GM12878 (cell line): ENCODE measurements at regions of chr1 and their contacts with region 1.

Region 1: DNA sequence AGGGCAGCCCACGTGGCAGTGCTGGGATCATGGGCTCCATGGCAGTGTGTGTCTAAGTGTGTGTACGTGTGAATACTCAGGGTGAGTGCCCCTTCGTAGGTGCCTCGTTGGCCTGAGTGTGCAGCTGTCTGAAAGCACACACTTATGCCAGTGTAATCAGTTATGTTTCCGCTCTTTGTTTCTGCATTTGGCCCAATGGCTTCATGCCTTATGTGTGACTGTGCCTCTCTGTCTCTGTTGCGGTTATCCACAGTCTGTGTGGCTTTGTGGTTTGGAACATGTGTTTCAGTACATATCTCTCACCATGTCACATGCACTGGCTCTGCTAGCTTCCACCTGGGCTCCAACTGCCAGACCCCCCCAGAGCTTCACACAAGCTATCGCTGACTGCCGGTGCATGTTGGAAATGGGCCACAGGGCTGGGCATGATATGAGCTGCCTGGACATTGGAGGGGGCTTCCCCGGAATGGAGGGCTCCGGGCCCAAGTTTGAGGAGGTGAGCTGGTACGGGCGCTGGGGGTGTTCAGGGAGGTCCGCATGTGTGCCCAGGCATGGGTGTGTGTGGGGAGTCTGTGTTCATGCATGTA is 70.3 kb upstream of the TINAGL1 start:
- DNase-seq: peak; percentile 83
- ATAC-seq: peak; percentile 56
- H3K4me3 ChIP-seq: no peak overlapping the region
- H3K27ac ChIP-seq: 0 out of 2 replicates have a peak overlapping the region, but pooled peaks have one; percentile 51
- H3K4me1 ChIP-seq: peaks cover 23% of the 10 kb centered on the region
- H3K27me3 ChIP-seq: no peaks in the 10 kb centered on the region
- CTCF ChIP-seq: no peak
- EP300 ChIP-seq: peak; percentile 79 to 91
- POLR2A ChIP-seq: no peak; the same call in 1 of the 2 replicates
- RAD21 ChIP-seq: no peak

Region 2: DNA sequence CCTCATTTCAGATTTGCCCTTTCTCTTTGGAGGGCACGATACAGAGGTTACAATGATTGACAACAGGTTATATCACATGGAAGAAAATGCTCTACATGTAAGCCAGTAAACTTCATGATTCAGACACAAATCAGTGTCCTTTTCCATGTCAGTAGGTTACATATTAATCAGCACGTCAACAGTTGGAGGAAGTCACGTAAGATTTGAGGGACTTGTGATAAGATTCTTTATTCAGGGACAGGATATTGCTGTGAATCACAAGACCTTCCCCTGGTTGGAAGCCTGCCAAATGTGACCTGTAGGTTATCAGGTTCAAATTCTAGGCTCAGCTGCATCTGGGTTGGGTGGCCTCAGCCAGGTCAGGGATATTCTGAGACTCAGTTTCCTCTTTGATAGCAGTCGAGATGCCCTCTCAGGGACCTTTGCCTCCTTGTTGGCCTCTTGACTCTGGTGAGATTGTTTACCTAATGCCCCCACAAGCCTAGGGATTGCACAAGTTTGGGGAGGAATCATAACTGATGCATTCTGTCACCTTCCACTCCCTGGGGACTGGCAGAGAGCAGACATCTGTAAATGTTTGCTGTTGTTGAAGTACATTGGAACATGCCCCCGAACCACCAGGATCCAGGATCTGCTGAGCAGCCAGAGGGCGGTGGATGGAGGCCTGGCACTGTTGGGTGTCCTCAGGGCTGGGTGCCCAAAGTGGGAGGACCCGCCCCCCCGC is 61.1 kb before region 1 on chr1:
- CTCF ChIA-PET with region 1: interaction called, 7 read pairs
- POLR2A ChIA-PET with region 1: interaction called, 12 read pairs
- RAD21 ChIA-PET with region 1: interaction called, 9 read pairs
- SMC1A ChIA-PET with region 1: interaction called, 9 read pairs
- in situ Hi-C with region 1: no loop called
- intact Hi-C with region 1: no loop called
- DNase-seq: no peak
- ATAC-seq: no peak
- H3K4me3 ChIP-seq: no peak overlapping the region
- H3K27ac ChIP-seq: no peak overlapping the region
- H3K4me1 ChIP-seq: no peaks in the 10 kb centered on the region
- H3K27me3 ChIP-seq: no peaks in the 10 kb centered on the region
- CTCF ChIP-seq: no peak
- EP300 ChIP-seq: no peak
- POLR2A ChIP-seq: no peak
- RAD21 ChIP-seq: no peak

Region 3: DNA sequence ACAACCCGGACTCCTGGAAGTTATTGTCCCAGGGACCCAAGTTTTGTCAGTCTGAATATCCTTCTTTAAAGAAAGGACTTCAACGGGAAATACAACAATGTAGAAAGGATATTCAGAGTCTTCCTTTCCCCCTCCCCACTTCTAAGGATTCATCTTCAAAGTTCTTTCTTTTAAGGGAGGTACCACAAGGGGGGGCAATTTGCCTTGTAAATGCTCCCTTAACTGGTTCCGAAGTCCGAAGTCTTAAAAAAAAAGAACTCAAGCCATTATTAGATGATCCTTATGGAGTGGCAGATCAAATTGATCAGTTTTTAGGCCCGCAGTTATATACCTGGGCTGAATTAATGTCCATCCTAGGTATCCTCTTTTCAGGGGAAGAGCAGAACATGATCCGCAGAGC is 46.0 kb before region 1 on chr1:
- CTCF ChIA-PET with region 1: interaction called, 5 read pairs
- POLR2A ChIA-PET with region 1: interaction called, 5 read pairs
- RAD21 ChIA-PET with region 1: interaction called, 8 read pairs
- SMC1A ChIA-PET with region 1: interaction called, 44 read pairs
- in situ Hi-C with region 1: no loop called
- intact Hi-C with region 1: loop called (anchors 5 kb)
- DNase-seq: no peak
- ATAC-seq: no peak
- H3K4me3 ChIP-seq: no peak overlapping the region
- H3K27ac ChIP-seq: no peak overlapping the region
- H3K4me1 ChIP-seq: no peaks in the 10 kb centered on the region
- H3K27me3 ChIP-seq: no peaks in the 10 kb centered on the region
- CTCF ChIP-seq: peak in 1 of 3 experiments; percentile 7; a peak in 1 of 6 replicates
- EP300 ChIP-seq: no peak
- POLR2A ChIP-seq: no peak
- RAD21 ChIP-seq: no peak

Region 4: DNA sequence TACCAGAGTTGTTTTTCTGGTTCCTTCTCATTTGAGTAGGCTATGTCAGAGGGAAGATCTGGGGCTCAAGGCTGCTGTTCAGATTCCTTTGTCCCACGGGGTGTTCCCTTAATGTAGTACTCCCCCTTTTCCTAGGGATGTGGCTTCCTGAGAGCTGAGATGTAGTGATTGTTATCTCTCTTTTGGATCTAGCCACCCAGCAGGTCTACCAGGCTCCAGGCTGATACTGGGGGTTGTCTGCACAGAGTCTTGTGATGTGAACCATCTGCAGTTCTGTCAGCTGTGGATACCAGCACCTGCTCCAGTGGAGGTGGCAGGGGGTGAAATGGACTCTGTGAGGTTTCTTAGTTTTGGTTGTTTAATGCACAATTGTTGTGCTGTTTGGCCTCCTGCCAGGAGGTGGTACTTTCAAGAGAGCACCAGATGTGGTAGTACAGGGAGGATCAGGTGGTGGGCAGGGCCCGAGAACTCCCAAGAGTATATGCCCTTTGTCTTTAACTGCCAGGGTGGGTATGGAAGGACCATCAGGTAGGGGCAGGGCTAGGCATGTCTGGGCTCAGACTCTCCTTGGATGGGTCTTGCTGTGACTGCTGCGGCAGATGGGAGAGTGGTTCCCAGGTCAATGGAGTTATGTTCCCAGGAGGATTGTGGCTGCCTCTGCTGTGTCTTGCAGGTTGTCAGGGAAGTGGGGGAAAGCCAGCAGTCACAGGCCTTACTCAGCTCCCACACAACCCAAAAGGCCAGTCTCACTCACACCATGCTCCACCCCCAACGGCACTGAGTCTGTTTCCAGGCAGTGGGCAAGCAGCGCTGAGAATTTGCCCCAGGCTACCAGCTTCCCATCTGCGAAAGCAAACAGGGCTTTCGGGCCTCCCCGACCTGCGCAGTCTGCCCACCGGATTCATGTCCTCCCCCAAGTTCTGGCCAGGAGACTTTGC is 28.8 kb before region 1 on chr1:
- CTCF ChIA-PET with region 1: interaction called, 35 read pairs
- POLR2A ChIA-PET with region 1: interaction called, 260 read pairs
- RAD21 ChIA-PET with region 1: interaction called, 122 read pairs
- SMC1A ChIA-PET with region 1: interaction called, 230 read pairs
- in situ Hi-C with region 1: no loop called
- intact Hi-C with region 1: no loop called
- DNase-seq: peak; percentile 77
- ATAC-seq: peak; percentile 89
- H3K4me3 ChIP-seq: no peak overlapping the region
- H3K27ac ChIP-seq: no peak overlapping the region
- H3K4me1 ChIP-seq: no peaks in the 10 kb centered on the region
- H3K27me3 ChIP-seq: no peaks in the 10 kb centered on the region
- CTCF ChIP-seq: no peak
- EP300 ChIP-seq: 0 out of 4 replicates have a peak, but pooled peaks of 1 of the 2 experiments have one; percentile 23
- POLR2A ChIP-seq: no peak
- RAD21 ChIP-seq: no peak

Region 5: DNA sequence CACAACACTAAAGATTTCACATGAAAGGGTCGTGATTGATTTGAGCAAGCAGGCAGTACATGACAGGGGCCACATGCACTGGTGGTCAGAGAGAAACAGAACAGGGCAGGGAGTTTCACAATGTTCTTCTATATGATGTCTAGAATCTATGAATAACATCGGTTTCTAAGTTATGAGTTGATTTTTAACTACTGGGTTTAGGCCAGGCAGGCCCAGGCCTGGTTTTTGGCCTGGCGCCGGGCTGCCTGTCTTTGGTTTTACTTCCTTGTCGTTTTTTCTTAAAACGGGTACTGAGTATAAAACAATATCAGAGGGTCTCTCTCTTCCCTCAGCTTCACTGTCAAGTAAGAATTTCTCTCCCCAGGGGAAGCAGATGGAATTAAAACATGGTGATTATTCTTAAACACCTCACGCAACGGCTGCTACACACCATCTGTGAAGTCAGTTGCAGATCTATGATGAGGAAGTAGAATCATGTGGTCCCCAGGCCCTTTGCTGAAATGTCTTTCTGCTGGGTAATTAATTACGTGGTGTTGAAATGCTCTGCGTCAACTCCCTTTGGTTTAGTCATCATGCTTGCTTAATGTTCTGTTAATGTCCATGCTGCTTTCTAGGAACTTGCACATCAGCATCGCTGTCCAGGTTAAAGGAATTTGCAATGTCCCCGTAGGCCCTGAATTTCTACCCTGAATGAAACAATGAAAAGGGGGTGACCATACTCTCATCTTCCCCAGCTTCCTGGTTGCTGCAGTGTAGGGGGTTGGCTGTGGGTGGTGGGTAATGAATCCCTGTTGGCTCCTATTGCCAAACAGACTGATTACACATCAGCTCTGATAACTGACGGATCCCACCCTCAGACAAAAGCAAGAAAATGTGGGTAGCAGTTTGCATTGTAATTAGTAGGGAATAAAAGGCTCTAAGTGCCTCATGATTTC is 22.7 kb before region 1 on chr1:
- CTCF ChIA-PET with region 1: interaction called, 35 read pairs
- POLR2A ChIA-PET with region 1: interaction called, 260 read pairs
- RAD21 ChIA-PET with region 1: interaction called, 122 read pairs
- SMC1A ChIA-PET with region 1: interaction called, 230 read pairs
- in situ Hi-C with region 1: no loop called
- intact Hi-C with region 1: loop called (anchors 1 kb)
- DNase-seq: peak; percentile 58
- ATAC-seq: peak; percentile 91
- H3K4me3 ChIP-seq: no peak overlapping the region
- H3K27ac ChIP-seq: peak overlapping the region; percentile 57
- H3K4me1 ChIP-seq: no peaks in the 10 kb centered on the region
- H3K27me3 ChIP-seq: no peaks in the 10 kb centered on the region
- CTCF ChIP-seq: no peak
- EP300 ChIP-seq: peak in 1 of 2 experiments; percentile 87; a peak in 3 of 4 replicates
- POLR2A ChIP-seq: no peak
- RAD21 ChIP-seq: no peak

Region 6: GRCh38 chr1:31488528-31488927 is 17.5 kb before region 1 on chr1:
- CTCF ChIA-PET with region 1: interaction called, 12 read pairs
- POLR2A ChIA-PET with region 1: interaction called, 260 read pairs
- RAD21 ChIA-PET with region 1: interaction called, 122 read pairs
- SMC1A ChIA-PET with region 1: interaction called, 230 read pairs
- in situ Hi-C with region 1: no loop called
- intact Hi-C with region 1: loop called (anchors 1 kb)
- DNase-seq: no peak
- ATAC-seq: no peak
- H3K4me3 ChIP-seq: no peak overlapping the region
- H3K27ac ChIP-seq: no peak overlapping the region
- H3K4me1 ChIP-seq: no peaks in the 10 kb centered on the region
- H3K27me3 ChIP-seq: no peaks in the 10 kb centered on the region
- CTCF ChIP-seq: no peak
- EP300 ChIP-seq: no peak
- POLR2A ChIP-seq: no peak
- RAD21 ChIP-seq: no peak

Region 7: GRCh38 chr1:31523769-31524168 is 17.8 kb after region 1 on chr1:
- CTCF ChIA-PET with region 1: interaction called, 17 read pairs
- POLR2A ChIA-PET with region 1: interaction called, 25 read pairs
- RAD21 ChIA-PET with region 1: interaction called, 41 read pairs
- SMC1A ChIA-PET with region 1: interaction called, 16 read pairs
- in situ Hi-C with region 1: no loop called
- intact Hi-C with region 1: no loop called
- DNase-seq: no peak
- ATAC-seq: peak; percentile 79
- H3K4me3 ChIP-seq: no peak overlapping the region
- H3K27ac ChIP-seq: no peak overlapping the region
- H3K4me1 ChIP-seq: no peaks in the 10 kb centered on the region
- H3K27me3 ChIP-seq: no peaks in the 10 kb centered on the region
- CTCF ChIP-seq: no peak
- EP300 ChIP-seq: no peak
- POLR2A ChIP-seq: no peak
- RAD21 ChIP-seq: no peak

Region 8: DNA sequence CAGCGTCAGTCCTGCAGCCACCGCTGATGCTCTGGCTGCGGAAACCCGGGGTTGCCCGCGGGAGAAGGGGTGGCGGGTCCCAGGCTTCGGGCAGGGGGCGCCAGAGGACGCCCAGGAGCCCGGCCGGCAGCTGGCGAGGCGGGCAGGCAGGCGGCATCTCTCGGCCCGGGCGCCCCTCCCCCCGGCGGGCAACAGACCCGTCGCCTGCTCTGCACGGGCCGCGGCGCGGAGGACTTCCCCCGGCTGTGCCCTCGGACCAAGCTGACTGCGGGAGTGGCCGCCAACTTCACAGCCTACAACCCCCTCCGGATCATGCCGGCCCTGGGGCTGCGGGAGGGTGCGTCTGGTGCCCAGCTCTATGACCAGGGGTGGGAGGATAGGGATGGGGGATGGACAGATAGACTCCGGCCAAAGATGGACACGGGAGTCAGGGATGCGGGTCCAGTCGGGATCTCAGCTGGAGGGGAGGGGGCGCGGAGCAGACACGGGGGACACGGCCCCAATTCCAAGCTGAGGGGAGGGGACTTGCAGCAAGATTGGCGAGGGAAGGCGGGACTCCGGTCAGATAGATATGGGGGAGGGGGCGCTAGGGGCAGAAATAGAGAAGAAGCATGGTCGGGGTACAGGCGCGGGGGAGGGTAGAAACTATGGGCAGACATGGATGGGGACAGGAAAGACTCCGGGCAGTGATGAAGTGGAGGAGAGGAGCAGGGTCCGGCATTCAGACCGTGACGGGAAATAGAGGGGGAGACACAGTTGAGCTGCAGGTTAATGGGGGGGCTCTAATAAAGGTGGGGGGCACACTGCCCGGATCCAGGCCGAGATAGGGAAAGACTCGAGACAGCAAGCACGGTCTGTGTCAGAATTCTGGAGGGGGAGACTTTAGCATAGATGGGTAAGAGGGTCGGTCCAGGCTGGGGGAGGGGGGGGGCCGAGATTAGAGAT is 257.0 kb after region 1 on chr1:
- CTCF ChIA-PET with region 1: no interaction called
- POLR2A ChIA-PET with region 1: no interaction called
- RAD21 ChIA-PET with region 1: no interaction called
- SMC1A ChIA-PET with region 1: no interaction called
- in situ Hi-C with region 1: no loop called
- intact Hi-C with region 1: no loop called
- DNase-seq: no peak
- ATAC-seq: peak; percentile 62
- H3K4me3 ChIP-seq: peak overlapping the region; percentile 32; the same call in 1 of the 2 replicates
- H3K27ac ChIP-seq: no peak overlapping the region
- H3K4me1 ChIP-seq: peaks cover 8% of the 10 kb centered on the region
- H3K27me3 ChIP-seq: peaks cover 20 to 26% of the 10 kb centered on the region in 2 experiments
- CTCF ChIP-seq: peak in 2 of 3 experiments; percentile 59 to 65; a peak in 4 of 6 replicates
- EP300 ChIP-seq: no peak
- POLR2A ChIP-seq: no peak
- RAD21 ChIP-seq: 0 out of 2 replicates have a peak, but pooled peaks have one; percentile 22